ENCODE measurements at regions of chr9 and their contacts with region 1.

Region 1: GRCh38 chr9:105881654-105882349 is 187.5 kb downstream of the TMEM38B start:
- DNase-seq: peak; percentile 87
- H3K4me3 Mint-ChIP-seq: no peak overlapping the region
- H3K27ac Mint-ChIP-seq: no peak overlapping the region
- H3K4me1 Mint-ChIP-seq: peaks cover 7% of the 10 kb centered on the region
- H3K27me3 Mint-ChIP-seq: peaks cover 2% of the 10 kb centered on the region

Region 2: DNA sequence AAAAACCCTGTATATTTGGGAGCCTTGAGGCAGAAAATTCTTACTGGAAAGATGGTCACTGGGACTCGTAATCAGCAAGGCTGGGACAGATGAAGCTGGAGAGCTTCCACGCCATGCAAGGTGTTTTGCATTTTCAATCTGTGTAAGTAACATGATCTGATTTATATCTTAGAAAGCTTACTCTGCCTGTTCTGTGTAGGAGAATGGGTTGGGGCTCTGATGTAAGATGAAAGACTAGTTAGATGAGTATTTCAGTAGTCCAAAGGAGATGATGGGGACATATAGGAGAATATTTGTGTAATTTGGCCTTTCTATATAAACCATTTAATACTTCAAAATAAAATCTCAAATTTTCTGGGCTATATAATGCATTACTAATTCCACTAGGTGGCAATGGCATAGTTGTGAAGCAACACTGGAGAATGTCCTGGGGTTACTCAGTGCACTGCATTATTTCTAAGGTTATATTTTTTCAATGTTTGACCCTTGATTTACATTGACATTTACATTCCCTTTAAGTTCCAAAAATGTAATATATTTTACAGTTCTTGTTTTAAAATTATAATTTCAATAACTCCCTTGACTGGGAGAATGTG is 455.9 kb before region 1 on chr9:
- CTCF ChIA-PET with region 1: no interaction called
- intact Hi-C with region 1: loop called (anchors 1 kb)
- DNase-seq: no peak
- H3K4me3 Mint-ChIP-seq: no peak overlapping the region
- H3K27ac Mint-ChIP-seq: no peak overlapping the region
- H3K4me1 Mint-ChIP-seq: no peaks in the 10 kb centered on the region
- H3K27me3 Mint-ChIP-seq: no peaks in the 10 kb centered on the region

Region 3: GRCh38 chr9:105447814-105448812 is 433.7 kb before region 1 on chr9 and contains the start of gene FSD1L:
- CTCF ChIA-PET with region 1: no interaction called
- intact Hi-C with region 1: loop called (anchors 5 kb)
- DNase-seq: peak; percentile 87
- H3K4me3 Mint-ChIP-seq: peak within 1 kb of the TSS; percentile 79
- H3K27ac Mint-ChIP-seq: no peak within 1 kb of the TSS
- H3K4me1 Mint-ChIP-seq: peaks cover 10% of the 10 kb centered on the region
- H3K27me3 Mint-ChIP-seq: no peaks in the 10 kb centered on the region
- total RNA-seq, gene FSD1L: 0.79 to 0.86 TPM

Region 4: DNA sequence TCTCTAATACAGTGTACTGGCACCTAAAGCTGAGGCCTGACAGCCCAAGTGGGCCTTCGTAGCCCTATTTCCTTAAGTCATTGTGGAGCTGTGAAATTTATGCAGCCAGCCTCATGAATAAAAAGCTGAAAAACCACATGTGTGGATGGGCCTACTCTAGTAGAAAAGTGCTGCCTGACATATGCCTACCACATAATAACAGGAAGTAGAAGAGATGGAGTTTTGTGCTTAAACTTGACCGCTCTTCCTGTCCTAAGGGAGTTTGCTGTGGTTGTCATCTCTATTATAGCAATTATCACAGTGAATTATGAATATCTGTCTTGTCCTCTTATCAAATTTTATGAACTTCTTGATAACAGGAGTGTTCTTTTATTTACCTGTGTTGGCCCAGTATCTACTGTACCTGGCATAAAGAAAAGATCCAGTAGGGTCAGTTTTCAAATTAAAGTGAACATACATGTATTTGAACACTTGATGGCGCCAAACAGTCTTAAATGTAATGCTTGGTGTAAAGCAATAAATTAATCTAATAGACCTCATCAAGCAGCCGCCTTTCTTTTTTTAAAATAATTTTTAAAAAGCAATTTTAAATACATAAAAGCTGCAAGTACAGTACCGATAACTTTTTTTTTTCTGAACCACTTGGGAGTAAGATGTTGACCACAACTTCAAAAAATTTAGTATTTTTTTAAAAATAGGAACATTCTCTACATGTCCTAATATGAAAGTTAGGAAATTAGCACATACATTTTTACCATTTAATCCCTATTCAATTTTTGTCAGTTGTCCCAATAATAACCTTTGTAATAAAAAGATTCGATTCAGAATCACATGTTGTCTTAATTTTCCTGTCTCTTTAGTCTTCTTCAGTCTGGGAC is 272.8 kb before region 1 on chr9:
- CTCF ChIA-PET with region 1: interaction called, 10 read pairs
- intact Hi-C with region 1: loop called (anchors 1 kb)
- DNase-seq: no peak
- H3K4me3 Mint-ChIP-seq: no peak overlapping the region
- H3K27ac Mint-ChIP-seq: no peak overlapping the region
- H3K4me1 Mint-ChIP-seq: no peaks in the 10 kb centered on the region
- H3K27me3 Mint-ChIP-seq: no peaks in the 10 kb centered on the region

Region 5: DNA sequence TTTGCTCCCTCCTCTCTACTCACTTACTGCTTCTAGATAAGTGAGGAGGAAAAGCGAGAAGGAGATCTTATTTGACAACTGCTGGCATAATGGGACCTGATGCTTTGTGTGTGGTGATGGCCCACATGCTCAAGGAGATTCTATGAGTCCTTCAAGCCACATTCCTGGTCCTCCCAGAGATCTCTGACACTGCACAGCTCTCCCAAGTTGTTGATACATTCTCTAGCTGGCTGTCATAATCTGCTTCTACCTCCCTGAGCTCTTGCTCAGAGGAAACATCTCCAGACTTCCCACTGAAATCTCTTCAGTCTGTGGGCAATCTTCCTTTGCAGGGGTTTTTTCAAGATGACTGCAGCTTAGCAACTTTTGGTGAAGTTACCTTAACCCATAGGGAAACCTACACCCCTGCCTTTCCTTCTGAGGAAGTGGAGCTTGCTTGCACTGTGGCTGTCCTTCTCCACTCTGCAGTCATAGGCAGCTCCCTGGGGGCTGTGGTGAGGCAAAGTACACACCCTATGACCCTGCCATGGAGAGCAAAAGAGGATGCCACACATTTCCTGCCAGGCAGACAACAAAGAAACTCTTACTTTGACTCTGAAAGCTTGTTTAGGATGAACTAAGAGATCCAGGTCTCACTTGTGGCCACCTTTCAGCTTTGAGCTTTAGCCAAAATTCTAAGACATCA is 23.7 kb before region 1 on chr9:
- CTCF ChIA-PET with region 1: interaction called, 10 read pairs
- intact Hi-C with region 1: no loop called
- DNase-seq: peak; percentile 46
- H3K4me3 Mint-ChIP-seq: no peak overlapping the region
- H3K27ac Mint-ChIP-seq: peak overlapping the region; percentile 27
- H3K4me1 Mint-ChIP-seq: peaks cover 28% of the 10 kb centered on the region
- H3K27me3 Mint-ChIP-seq: no peaks in the 10 kb centered on the region